HEK293 (cell line): ENCODE measurements at regions of chr1 and their contacts with region 1.

Region 1: DNA sequence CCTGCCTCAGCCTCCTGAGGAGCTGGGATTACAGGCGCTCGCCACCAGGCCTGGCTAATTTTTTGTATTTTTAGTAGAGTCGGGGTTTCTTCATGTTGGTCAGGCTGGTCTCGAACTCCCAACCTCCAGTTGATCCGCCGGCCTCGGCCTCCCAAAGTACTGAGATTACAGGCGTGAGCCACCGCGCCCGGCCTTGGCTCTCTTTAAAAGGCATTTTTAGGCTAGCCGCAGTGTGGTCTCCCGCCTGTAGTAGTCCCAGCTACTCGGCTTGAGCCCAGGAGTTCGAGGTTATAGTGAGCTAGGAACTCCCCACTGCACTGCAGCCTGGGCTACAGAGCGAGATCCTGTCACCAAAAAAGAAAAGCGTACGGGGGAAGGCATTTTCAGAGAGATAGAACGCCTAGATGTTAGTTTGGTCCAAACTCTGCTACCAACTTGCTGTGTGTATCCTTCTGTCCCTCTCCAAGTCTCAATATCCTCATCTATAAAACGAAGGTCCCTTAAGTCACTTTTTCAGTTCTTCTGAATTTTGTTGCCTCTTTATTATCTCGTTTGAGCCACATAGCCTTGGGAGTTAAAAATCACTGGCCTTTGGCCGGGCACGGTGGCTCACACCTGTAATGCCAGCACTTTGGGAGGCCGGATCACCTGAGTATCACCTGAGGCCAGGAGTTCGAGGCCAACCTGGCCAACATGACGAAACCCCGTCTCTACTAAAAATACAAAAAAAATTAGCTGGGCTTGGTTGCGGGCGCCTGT is 734 bp downstream of the MED18 start:
- H3K4me3 ChIP-seq: peak overlapping the region; percentile 65
- H3K27ac ChIP-seq: peak overlapping the region; percentile 72
- H3K4me1 ChIP-seq: no peaks in the 10 kb centered on the region
- CTCF ChIP-seq: no peak

Region 2: DNA sequence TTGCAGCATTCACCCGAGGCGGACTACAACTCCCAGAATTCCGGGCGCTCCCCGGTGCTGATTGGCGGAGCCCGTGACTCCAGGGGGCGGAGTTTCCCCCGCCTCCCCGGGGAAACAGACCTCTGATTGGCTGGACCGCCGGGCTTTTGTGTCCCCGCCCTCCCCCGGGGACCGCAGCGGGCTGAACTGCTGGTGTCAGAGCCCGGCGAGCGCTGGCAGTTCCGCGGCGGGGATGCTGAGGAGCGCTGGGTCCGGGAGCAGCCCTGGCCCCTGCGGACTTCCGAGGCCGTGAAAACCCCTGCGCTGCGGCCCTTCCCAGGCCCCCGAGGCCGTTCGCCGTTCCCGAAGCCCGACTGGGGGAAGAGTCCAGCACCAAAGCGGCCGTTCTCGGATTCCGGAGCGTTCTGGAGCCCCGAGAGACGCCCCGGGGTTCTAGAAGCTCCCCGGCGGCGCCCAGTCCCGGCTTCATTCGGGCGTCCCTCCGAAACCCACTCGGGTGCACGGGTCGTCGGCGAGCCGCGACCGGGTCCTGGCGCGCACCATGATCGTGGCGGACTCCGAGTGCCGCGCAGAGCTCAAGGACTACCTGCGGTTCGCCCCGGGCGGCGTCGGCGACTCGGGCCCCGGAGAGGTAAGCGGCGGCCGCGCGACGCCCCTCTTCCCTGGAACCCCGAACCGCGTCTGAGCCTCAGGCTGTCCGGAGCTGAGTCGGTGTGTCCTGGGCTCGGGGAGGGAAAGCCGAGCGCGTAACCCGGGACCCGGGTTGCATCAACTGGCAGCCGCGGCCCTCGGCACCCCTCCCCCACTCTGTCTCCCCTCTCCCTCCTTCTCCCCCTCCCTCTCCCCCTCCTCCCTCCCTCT is 70.0 kb before region 1 on chr1 and contains the start of gene SESN2:
- CTCF ChIA-PET with region 1: interaction called, 7 read pairs
- POLR2A ChIA-PET with region 1: interaction called, 20 read pairs
- H3K4me3 ChIP-seq: peak within 1 kb of the TSS; percentile 97
- H3K27ac ChIP-seq: peak within 1 kb of the TSS; percentile 97
- H3K4me1 ChIP-seq: no peaks in the 10 kb centered on the region; the same call in 1 of the 2 replicates
- CTCF ChIP-seq: 0 out of 2 replicates have a peak, but pooled peaks have one; percentile 13

Region 3: DNA sequence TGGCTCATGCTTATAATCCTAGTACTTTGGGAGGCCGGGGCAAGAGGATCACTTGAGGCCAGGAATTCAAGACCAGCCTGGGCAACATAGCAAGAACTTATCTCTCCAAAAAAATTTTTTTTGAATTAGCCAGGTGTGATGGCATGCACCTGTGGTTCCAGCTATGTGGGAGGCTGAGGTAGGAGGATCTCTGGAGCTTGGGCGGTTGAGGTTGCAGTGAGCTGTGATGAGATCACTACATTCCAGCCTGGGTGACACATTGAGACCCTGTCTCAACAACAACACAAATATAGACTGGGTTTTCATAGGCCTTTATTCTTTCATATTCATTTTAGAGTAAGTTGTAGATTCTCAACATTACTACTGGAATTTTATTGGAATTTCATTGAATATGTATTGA is 12.0 kb after region 1 on chr1:
- CTCF ChIA-PET with region 1: interaction called, 3 read pairs
- POLR2A ChIA-PET with region 1: interaction called, 33 read pairs
- H3K4me3 ChIP-seq: no peak overlapping the region
- H3K27ac ChIP-seq: no peak overlapping the region
- H3K4me1 ChIP-seq: no peaks in the 10 kb centered on the region
- CTCF ChIP-seq: no peak

Region 4: GRCh38 chr1:28378906-28379305 is 49.3 kb after region 1 on chr1:
- CTCF ChIA-PET with region 1: no interaction called
- POLR2A ChIA-PET with region 1: no interaction called
- H3K4me3 ChIP-seq: no peak overlapping the region
- H3K27ac ChIP-seq: no peak overlapping the region
- H3K4me1 ChIP-seq: peaks cover 7% of the 10 kb centered on the region
- CTCF ChIP-seq: no peak

Region 5: GRCh38 chr1:28505406-28506187 is 176.0 kb after region 1 on chr1 and contains the start of gene RCC1:
- CTCF ChIA-PET with region 1: no interaction called
- POLR2A ChIA-PET with region 1: interaction called, 14 read pairs
- H3K4me3 ChIP-seq: peak within 1 kb of the TSS; percentile 79
- H3K27ac ChIP-seq: peak within 1 kb of the TSS; percentile 86
- H3K4me1 ChIP-seq: no peaks in the 10 kb centered on the region; the same call in 1 of the 2 replicates
- CTCF ChIP-seq: no peak